ENCODE measurements at regions of chr22 and their contacts with region 1.

Region 1: DNA sequence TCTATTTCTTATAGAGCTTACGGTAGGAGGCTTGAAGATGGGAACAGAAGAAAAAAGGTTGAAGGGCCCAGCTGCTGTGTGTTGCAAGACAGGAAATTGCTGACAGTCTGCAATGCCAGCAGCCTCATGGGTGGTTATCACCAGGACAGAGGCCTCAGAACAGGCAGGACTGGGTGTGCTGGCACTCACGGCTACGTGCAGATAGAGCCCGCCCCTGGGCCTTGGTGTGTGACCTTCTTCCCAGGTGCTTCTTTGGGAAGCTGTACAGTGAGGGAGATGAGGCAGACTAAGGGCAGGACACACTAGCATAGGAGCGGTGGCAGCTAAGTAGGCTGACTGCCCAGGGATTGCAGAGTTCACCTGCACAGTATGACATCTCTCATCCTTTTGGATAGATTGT is 12.6 kb downstream of the PRAME start:
- DNase-seq: no peak
- ATAC-seq: peak; percentile 19 to 28; a peak in 2 of 6 replicates
- H3K4me3 ChIP-seq: no peak overlapping the region
- H3K27ac ChIP-seq: no peak overlapping the region
- H3K4me1 ChIP-seq: no peaks in the 10 kb centered on the region
- CTCF ChIP-seq: no peak
- EP300 ChIP-seq: no peak
- POLR2A ChIP-seq: no peak
- RAD21 ChIP-seq: no peak

Region 2: GRCh38 chr22:22558972-22559603 is 12.6 kb after region 1 on chr22 and contains the start of gene PRAME:
- CTCF ChIA-PET with region 1: interaction called, 14 read pairs
- POLR2A ChIA-PET with region 1: no interaction called
- DNase-seq: peak; percentile 71 to 93
- ATAC-seq: peak; percentile 95 to 98
- H3K4me3 ChIP-seq: peak within 1 kb of the TSS; percentile 90
- H3K27ac ChIP-seq: peak within 1 kb of the TSS; percentile 96 to 99
- H3K4me1 ChIP-seq: peaks cover 36% of the 10 kb centered on the region; the same call in 2 of the 3 replicates
- CTCF ChIP-seq: peak; percentile 76
- EP300 ChIP-seq: no peak
- POLR2A ChIP-seq: peak; percentile 15; the same call in 1 of the 2 replicates
- RAD21 ChIP-seq: peak; percentile 44 to 59
- polyA plus RNA-seq, gene PRAME: 173 and 228 TPM in 2 replicates

Measured in A549 (cell line).